K562 (cell line): ENCODE measurements at regions of chr15 and their contacts with region 1.

Region 1: GRCh38 chr15:93052090-93052879 is 36.7 kb downstream of the RGMA start:
- DNase-seq: peak; percentile 41 to 53 (median 50)
- ATAC-seq: peak; percentile 82
- H3K4me3 ChIP-seq: no peak overlapping the region
- H3K27ac ChIP-seq: no peak overlapping the region
- H3K4me1 ChIP-seq: peaks cover 0 to 21% of the 10 kb centered on the region in 2 experiments; a peak in 2 of 5 replicates
- H3K27me3 ChIP-seq: peaks cover 57 to 93% of the 10 kb centered on the region in 2 experiments; a peak in 4 of 5 replicates
- CTCF ChIP-seq: peak; percentile 72 to 77 (median 76)
- EP300 ChIP-seq: no peak
- POLR2A ChIP-seq: no peak
- RAD21 ChIP-seq: peak; percentile 29 to 65

Region 2: GRCh38 chr15:92733934-92734521 is 318.3 kb before region 1 on chr15:
- CTCF ChIA-PET with region 1: no interaction called
- POLR2A ChIA-PET with region 1: no interaction called
- in situ Hi-C with region 1: no loop called
- intact Hi-C with region 1: loop called (anchors 10 kb)
- DNase-seq: peak; percentile 25 to 54 (median 36)
- ATAC-seq: peak; percentile 95
- H3K4me3 ChIP-seq: peak overlapping the region; percentile 43
- H3K27ac ChIP-seq: peak overlapping the region; percentile 25; the same call in 1 of the 3 replicates
- H3K4me1 ChIP-seq: peaks cover 0 to 5% of the 10 kb centered on the region in 2 experiments; a peak in 3 of 5 replicates
- H3K27me3 ChIP-seq: peaks cover 10 to 14% of the 10 kb centered on the region in 2 experiments
- CTCF ChIP-seq: no peak
- EP300 ChIP-seq: no peak
- POLR2A ChIP-seq: 0 out of 2 replicates have a peak, but pooled peaks have one; percentile 39
- RAD21 ChIP-seq: no peak

Region 3: DNA sequence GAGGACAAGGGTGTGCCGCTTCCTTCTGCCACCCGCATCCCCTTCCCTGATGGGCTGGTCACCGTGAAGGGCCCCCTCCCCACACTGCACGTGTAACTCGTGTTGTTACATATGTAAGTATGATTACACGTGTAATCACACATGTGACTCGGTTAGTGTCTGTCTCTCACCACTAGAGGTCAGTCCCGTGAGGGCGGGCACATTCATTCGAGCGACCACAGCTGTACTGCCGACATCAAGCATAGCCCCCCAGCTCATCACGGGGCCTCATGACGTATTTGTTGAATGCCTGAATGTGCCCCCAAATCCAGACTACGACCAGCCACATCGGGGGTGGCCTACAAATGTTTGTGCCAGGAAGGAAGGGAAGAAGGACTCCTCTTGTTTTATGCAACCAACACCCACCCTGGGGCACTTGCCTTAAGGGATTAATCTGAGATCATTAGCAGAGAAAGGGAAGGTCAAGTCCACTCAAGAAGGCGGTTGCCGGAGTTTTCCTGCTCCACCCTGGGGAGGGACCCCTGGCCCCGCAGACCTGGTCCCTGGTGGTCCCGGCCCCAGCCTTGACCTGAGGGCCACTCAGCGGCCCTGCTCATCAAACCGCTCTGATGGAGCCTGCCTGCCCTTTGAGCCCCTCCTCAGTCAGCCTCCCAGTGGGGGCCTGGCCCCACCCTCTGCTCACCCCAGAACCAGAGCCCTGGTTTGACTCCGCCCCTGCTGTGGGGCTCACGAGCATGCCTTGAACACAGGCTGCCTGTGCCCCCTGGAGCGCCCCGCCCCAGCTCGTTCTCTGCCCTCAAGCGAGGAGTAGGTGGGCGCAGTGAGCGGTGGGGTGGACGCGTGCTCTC is 16.1 kb before region 1 on chr15:
- CTCF ChIA-PET with region 1: interaction called, 3 read pairs
- POLR2A ChIA-PET with region 1: interaction called, 4 read pairs
- in situ Hi-C with region 1: no loop called
- intact Hi-C with region 1: loop called (anchors 2 kb)
- DNase-seq: peak; percentile 62 to 77 (median 74)
- ATAC-seq: peak; percentile 83
- H3K4me3 ChIP-seq: no peak overlapping the region
- H3K27ac ChIP-seq: no peak overlapping the region
- H3K4me1 ChIP-seq: peaks cover 10 to 26% of the 10 kb centered on the region in 2 experiments; a peak in 4 of 5 replicates
- H3K27me3 ChIP-seq: peaks cover 9 to 36% of the 10 kb centered on the region in 2 experiments
- CTCF ChIP-seq: peak; percentile 62 to 85 (median 63)
- EP300 ChIP-seq: no peak
- POLR2A ChIP-seq: no peak
- RAD21 ChIP-seq: peak; percentile 9 to 53; a peak in 2 of 4 replicates

Region 4: GRCh38 chr15:93066834-93067509 is 14.7 kb after region 1 on chr15:
- CTCF ChIA-PET with region 1: no interaction called
- POLR2A ChIA-PET with region 1: no interaction called
- in situ Hi-C with region 1: no loop called
- intact Hi-C with region 1: no loop called
- DNase-seq: no peak
- ATAC-seq: no peak
- H3K4me3 ChIP-seq: no peak overlapping the region
- H3K27ac ChIP-seq: no peak overlapping the region
- H3K4me1 ChIP-seq: peaks cover 0 to 3% of the 10 kb centered on the region in 2 experiments; a peak in 1 of 5 replicates
- H3K27me3 ChIP-seq: peaks cover 74% of the 10 kb centered on the region in 2 experiments
- CTCF ChIP-seq: no peak
- EP300 ChIP-seq: no peak
- POLR2A ChIP-seq: no peak
- RAD21 ChIP-seq: no peak

Region 5: GRCh38 chr15:93087825-93088199 is 35.5 kb after region 1 on chr15:
- CTCF ChIA-PET with region 1: no interaction called
- POLR2A ChIA-PET with region 1: no interaction called
- in situ Hi-C with region 1: no loop called
- intact Hi-C with region 1: no loop called
- DNase-seq: peak; percentile 61 to 76 (median 68)
- ATAC-seq: peak; percentile 92
- H3K4me3 ChIP-seq: no peak overlapping the region
- H3K27ac ChIP-seq: no peak overlapping the region
- H3K4me1 ChIP-seq: peaks cover 0 to 11% of the 10 kb centered on the region in 2 experiments; a peak in 1 of 5 replicates
- H3K27me3 ChIP-seq: peaks cover 4 to 20% of the 10 kb centered on the region in 2 experiments; a peak in 3 of 5 replicates
- CTCF ChIP-seq: peak; percentile 75 to 83 (median 77)
- EP300 ChIP-seq: no peak
- POLR2A ChIP-seq: no peak
- RAD21 ChIP-seq: peak; percentile 36 to 73